ENCODE measurements at regions of chr21 and their contacts with region 1.

Region 1: DNA sequence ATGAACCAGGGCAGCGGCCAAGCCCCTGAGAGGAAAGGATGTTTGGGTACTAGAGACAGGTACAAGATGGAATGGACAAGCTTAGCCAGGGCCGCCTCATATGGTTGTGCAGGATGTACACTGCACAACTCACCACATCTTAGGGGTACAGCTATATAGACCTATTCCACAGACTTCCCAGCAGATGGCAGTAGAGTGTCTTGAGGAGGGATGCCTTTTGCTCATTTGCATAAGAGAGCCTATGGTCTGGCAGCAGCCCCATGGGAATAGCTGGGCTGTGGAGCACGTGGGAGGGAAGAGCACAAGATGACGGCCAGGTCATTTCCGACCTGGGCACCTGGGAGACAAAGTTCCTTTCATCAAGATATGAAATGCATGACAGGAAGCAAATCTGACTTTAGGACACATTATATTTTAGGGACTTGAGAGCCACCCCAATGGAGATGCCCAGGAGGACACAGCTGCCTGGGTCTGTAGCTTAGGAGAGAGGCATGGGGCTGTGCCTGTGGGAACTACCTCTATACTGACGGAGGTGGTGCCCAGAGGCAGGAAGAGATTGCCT is 215.5 kb downstream of the KCNJ6 start:
- DNase-seq: peak; percentile 58 to 72 (median 68)
- H3K4me3 ChIP-seq: no peak overlapping the region
- H3K27ac ChIP-seq: no peak overlapping the region
- H3K4me1 ChIP-seq: no peaks in the 10 kb centered on the region
- H3K27me3 ChIP-seq: peaks cover 0 to 4% (median 0%) of the 10 kb centered on the region in 5 experiments

Region 2: GRCh38 chr21:37711836-37712568 is 11.3 kb after region 1 on chr21:
- CTCF ChIA-PET with region 1: interaction called, 17 read pairs
- POLR2A ChIA-PET with region 1: no interaction called
- DNase-seq: peak; percentile 57 to 76 (median 72)
- H3K4me3 ChIP-seq: no peak overlapping the region
- H3K27ac ChIP-seq: no peak overlapping the region
- H3K4me1 ChIP-seq: peaks cover 0 to 4% (median 1%) of the 10 kb centered on the region in 4 experiments
- H3K27me3 ChIP-seq: peaks cover 0 to 4% (median 0%) of the 10 kb centered on the region in 5 experiments

Region 3: GRCh38 chr21:37871121-37871862 is 170.6 kb after region 1 on chr21:
- CTCF ChIA-PET with region 1: no interaction called
- POLR2A ChIA-PET with region 1: no interaction called
- DNase-seq: no peak
- H3K4me3 ChIP-seq: no peak overlapping the region
- H3K27ac ChIP-seq: no peak overlapping the region
- H3K4me1 ChIP-seq: peaks cover 0 to 1% (median 0%) of the 10 kb centered on the region in 4 experiments
- H3K27me3 ChIP-seq: peaks cover 0 to 2% (median 0%) of the 10 kb centered on the region in 5 experiments

Measured in common myeloid progenitor, CD34-positive (primary cell).